Activated CD4-positive, alpha-beta memory T cell treated with anti-CD3 and anti-CD28 coated beads for 36 hours (primary cell): ENCODE measurements at regions of chr6 and their contacts with region 1.

Region 1: DNA sequence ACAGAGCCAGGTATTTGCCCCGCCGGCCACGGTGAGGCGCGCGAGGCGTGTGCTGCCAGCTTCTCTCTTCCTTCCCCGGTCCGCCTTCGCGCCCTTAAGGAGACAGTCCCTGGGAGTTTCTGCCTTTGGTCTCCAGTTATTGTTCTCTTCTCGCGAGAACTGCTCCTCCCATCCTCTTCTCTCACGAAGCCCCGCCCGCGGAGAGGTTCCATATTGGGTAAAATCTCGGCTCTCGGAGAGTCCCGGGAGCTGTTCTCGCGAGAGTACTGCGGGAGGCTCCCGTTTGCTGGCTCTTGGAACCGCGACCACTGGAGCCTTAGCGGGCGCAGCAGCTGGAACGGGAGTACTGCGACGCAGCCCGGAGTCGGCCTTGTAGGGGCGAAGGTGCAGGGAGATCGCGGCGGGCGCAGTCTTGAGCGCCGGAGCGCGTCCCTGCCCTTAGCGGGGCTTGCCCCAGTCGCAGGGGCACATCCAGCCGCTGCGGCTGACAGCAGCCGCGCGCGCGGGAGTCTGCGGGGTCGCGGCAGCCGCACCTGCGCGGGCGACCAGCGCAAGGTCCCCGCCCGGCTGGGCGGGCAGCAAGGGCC is at the start of gene MAPK14:
- DNase-seq: peak; percentile 99
- H3K4me3 Mint-ChIP-seq: peak within 1 kb of the TSS; percentile 98
- H3K27ac Mint-ChIP-seq: peak within 1 kb of the TSS; percentile 97
- H3K4me1 Mint-ChIP-seq: peaks cover 28% of the 10 kb centered on the region
- H3K27me3 Mint-ChIP-seq: peaks cover 12% of the 10 kb centered on the region
- total RNA-seq, gene MAPK14: 39.3 to 44.0 TPM

Region 2: DNA sequence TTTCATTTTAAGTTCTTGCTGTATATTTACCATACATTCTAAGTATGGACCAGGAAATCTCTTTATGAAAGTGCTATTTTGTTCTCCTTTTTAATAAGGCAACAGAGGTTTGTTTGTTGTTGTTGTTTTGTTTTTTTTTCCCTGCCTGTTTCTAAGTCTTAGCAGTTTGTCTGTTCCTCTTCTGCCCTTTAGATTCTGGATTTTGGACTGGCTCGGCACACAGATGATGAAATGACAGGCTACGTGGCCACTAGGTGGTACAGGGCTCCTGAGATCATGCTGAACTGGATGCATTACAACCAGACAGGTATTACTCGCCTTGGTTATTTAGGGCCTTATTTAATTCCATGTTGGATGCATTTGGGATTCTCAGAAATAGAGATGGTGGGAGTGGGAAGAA is 48.1 kb after region 1 on chr6:
- CTCF ChIA-PET with region 1: interaction called, 11 read pairs
- POLR2A ChIA-PET with region 1: interaction called, 7 read pairs
- intact Hi-C with region 1: loop called (anchors 5 kb)
- DNase-seq: no peak
- H3K4me3 Mint-ChIP-seq: no peak overlapping the region
- H3K27ac Mint-ChIP-seq: no peak overlapping the region
- H3K4me1 Mint-ChIP-seq: peaks cover 21% of the 10 kb centered on the region
- H3K27me3 Mint-ChIP-seq: no peaks in the 10 kb centered on the region

Region 3: GRCh38 chr6:36123257-36124139 is 95.9 kb after region 1 on chr6:
- CTCF ChIA-PET with region 1: interaction called, 26 read pairs
- POLR2A ChIA-PET with region 1: interaction called, 47 read pairs
- intact Hi-C with region 1: loop called (anchors 1 kb)
- DNase-seq: peak; percentile 96
- H3K4me3 Mint-ChIP-seq: no peak overlapping the region
- H3K27ac Mint-ChIP-seq: peak overlapping the region; percentile 59
- H3K4me1 Mint-ChIP-seq: peaks cover 78% of the 10 kb centered on the region
- H3K27me3 Mint-ChIP-seq: no peaks in the 10 kb centered on the region

Region 4: GRCh38 chr6:36196880-36197548 is 169.4 kb after region 1 on chr6:
- CTCF ChIA-PET with region 1: interaction called, 12 read pairs
- POLR2A ChIA-PET with region 1: interaction called, 10 read pairs
- intact Hi-C with region 1: loop called (anchors 1 kb)
- DNase-seq: peak; percentile 100
- H3K4me3 Mint-ChIP-seq: peak overlapping the region; percentile 82
- H3K27ac Mint-ChIP-seq: peak overlapping the region; percentile 90
- H3K4me1 Mint-ChIP-seq: peaks cover 46% of the 10 kb centered on the region
- H3K27me3 Mint-ChIP-seq: no peaks in the 10 kb centered on the region

Region 5: DNA sequence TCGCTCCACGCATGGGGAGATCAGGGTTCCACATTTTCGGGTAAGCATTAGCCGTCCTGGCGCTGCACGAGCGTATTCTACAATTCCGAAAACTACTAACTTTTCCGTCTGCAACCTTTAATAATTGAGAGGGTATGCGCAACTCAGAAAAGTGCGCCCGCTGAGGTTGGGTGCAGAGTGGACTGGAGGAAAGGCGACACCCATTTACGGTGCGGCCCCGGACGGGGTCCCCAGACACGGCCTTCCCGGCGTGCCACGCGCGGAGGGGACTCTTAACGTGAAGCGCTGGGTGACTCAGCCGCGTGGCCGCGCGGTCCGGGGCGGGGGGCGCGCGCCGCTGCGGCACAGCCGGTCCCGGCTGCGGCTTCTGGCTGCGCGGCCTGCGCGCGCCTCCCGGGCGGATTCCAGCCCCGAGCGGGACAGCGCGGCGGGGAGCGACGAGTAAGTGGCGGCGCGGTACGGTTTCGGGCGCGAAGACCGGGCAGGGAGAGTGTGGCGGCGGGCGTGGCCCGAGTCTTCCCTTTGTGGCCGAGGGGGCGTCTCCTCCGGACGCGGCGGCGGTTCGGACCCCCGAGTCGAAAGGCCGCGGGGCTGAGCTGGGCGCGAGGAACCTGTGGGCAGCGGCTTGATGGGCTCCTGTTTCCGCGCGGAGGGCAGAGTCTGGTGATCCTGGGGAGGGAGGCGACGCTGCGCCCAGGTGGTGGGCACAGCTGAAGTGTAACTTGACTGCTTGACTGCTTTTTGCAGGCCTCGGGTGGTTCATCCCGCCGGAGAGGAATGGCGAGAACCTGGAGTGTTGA is 415.3 kb after region 1 on chr6 and contains the starts of genes KCTD20 and PXT1:
- CTCF ChIA-PET with region 1: no interaction called
- POLR2A ChIA-PET with region 1: no interaction called
- intact Hi-C with region 1: loop called (anchors 5 kb)
- DNase-seq: peak; percentile 93
- H3K4me3 Mint-ChIP-seq: peak within 1 kb of the TSS; percentile 97
- H3K27ac Mint-ChIP-seq: peak within 1 kb of the TSS; percentile 97
- H3K4me1 Mint-ChIP-seq: peaks cover 34% of the 10 kb centered on the region
- H3K27me3 Mint-ChIP-seq: no peaks in the 10 kb centered on the region
- total RNA-seq, gene KCTD20: 48.0 to 51.0 TPM
- total RNA-seq, gene PXT1: 0.22 to 0.29 TPM

Region 6: GRCh38 chr6:36716476-36717093 is 689.0 kb after region 1 on chr6:
- CTCF ChIA-PET with region 1: no interaction called
- POLR2A ChIA-PET with region 1: no interaction called
- intact Hi-C with region 1: no loop called
- DNase-seq: no peak
- H3K4me3 Mint-ChIP-seq: no peak overlapping the region
- H3K27ac Mint-ChIP-seq: no peak overlapping the region
- H3K4me1 Mint-ChIP-seq: peaks cover 4% of the 10 kb centered on the region
- H3K27me3 Mint-ChIP-seq: no peaks in the 10 kb centered on the region